ENCODE measurements at regions of chr3 and their contacts with region 1.

Region 1: DNA sequence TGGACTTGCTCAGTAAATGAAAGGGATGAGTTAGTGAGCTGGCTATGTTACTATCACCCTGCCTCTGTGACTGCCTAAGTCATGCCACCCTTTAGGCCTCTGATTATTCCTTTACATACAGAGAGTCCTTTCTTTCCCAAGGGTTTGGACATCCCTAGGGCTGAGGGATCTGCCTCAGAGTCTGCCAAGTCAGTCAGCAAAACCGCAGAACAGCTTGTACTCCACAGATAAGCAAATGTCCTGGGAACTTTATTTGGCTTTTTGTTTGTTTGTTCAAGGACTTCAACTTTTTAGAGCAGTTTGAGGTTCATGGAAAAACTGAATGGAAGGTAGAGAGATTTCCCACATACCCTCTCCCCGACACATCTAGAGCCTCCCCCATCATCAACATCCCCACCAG is 82.6 kb upstream of the TRIM42 start:
- DNase-seq: peak in 1 of 2 donors; percentile 7
- ATAC-seq: peak in 7 of 8 donors; percentile 62 to 90 (median 80)
- H3K4me3 ChIP-seq: no peak overlapping the region
- H3K27ac ChIP-seq: peak overlapping the region in 7 of 10 donors; percentile 9 to 82 (median 32)
- H3K4me1 ChIP-seq: peaks cover 5 to 40% (median 21%) of the 10 kb centered on the region in 9 donors
- H3K27me3 ChIP-seq: no peaks in the 10 kb centered on the region
- CTCF ChIP-seq: no peak

Region 2: DNA sequence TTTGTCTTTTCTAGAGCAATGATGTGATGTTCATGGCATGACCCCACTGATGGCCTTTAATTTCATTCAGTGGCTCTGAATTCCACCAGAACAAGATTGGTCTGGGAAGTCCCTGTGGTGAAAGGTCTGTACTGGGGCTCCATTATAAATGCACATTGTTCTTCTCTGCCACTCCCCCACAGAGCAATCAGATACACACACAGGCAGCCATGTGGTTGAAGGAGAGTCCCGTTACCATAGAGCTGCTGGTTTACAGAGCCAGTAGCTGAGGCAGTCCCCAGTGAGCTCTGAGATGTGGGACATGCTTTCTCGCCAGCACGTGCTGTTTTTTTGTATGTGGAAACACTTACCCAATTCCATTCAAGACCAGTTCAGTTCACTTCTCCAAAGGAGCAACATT is 90.1 kb before region 1 on chr3:
- intact Hi-C with region 1: loop called in 1 of 10 experiments (anchors 10 kb)
- DNase-seq: peak in 1 of 2 donors; percentile 6
- ATAC-seq: peak in 7 of 8 donors; percentile 34 to 68 (median 54)
- H3K4me3 ChIP-seq: no peak overlapping the region
- H3K27ac ChIP-seq: no peak overlapping the region
- H3K4me1 ChIP-seq: peaks cover 0 to 21% (median 3%) of the 10 kb centered on the region in 9 donors
- H3K27me3 ChIP-seq: peaks cover 0 to 15% (median 0%) of the 10 kb centered on the region in 7 donors
- CTCF ChIP-seq: no peak

Region 3: GRCh38 chr3:140724856-140725812 is 129.8 kb after region 1 on chr3:
- intact Hi-C with region 1: loop called in 1 of 10 experiments (anchors 5 kb)
- DNase-seq: no peak
- ATAC-seq: no peak
- H3K4me3 ChIP-seq: no peak overlapping the region
- H3K27ac ChIP-seq: no peak overlapping the region
- H3K4me1 ChIP-seq: peaks cover 0 to 6% (median 0%) of the 10 kb centered on the region in 9 donors
- H3K27me3 ChIP-seq: peaks cover 0 to 13% (median 0%) of the 10 kb centered on the region in 7 donors
- CTCF ChIP-seq: no peak